ENCODE measurements at regions of chr6 and their contacts with region 1.

Region 1: DNA sequence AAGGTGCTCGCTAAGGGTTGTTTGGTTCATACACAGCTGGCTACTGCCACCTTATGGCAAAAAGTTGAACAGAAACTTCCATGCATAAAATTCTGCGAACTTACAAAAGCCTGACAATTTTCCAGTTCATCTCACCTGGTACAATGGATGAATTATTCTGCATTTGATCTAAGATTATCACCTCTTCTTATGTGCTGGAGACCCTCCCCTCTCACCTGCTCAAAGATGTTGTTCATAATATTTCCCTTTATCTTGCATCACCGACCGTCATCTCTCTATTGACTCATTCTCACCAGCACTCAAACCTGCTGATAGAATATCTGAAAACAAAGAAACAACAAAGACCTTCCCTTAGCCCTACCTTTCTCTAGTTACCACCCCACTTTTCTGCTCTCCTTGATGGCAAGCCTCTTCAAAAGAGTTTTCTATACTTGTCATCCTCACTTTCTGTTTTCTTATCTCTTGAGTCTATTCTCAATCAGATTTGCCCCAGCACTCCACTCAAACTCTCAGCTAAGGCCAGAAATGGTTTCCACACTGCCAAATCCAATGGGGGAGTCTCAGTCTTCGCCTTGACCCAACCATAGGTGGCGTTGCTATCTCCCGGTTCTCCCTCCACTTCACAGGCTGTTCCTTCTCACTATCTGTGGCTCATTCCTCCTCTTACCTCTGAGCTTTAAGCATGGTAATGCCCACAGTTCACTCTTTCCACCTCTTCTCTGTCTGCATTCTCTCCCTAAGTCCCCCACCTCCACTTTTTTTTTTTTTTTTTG is 25.8 kb downstream of the SNRNP48 start:
- DNase-seq: peak; percentile 85

Region 2: GRCh38 chr6:7282097-7282906 is 333.5 kb before region 1 on chr6:
- in situ Hi-C with region 1: loop called (anchors 25 kb)
- DNase-seq: no peak

Region 3: DNA sequence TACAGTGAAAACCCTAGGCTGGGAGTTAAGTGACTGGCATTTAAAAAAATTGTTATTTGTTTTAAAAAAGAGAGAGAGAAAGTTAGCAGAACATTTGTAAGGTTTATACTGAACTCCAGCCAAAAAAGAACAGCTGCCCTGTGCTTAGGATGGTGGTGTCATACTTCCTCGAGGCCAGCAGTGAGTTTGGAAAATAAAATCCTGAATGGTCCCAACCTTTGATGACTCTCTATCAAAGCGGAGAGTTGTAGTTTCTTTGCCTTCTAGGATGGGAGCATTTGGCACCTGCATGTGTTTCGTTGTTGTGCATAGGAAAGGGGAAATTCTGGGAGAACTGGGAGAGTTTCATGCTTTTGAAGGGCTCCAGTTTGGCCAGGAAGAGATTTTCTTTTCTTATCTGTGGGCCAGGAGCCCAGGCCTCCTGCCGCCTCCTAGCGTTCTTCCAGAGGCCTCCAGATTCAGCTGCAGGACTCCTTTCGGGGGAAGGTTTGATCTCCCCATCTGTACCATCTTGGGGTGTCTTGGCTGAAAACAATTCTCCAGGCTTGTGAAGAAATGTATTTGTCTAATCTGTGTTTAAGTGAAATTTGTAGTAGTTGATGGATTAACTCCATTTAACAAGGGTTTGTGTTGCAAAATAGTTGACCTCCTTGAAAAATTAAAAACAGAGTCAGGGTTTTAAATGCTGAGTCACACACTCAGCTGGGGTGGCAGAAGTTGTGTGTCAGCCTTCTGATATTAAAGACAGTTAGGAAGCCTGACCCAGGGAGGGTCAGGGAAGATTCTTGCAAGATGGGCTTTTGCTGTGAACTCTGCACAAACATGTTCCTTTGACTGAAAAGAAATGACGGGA is 231.4 kb after region 1 on chr6:
- in situ Hi-C with region 1: no loop called
- DNase-seq: no peak

Measured in SK-MEL-5 (cell line).